Endothelial cell of umbilical vein (primary cell): ENCODE measurements at regions of chr11 and their contacts with region 1.

Region 1: GRCh38 chr11:62108017-62108750 is 15.6 kb upstream of the INCENP start:
- DNase-seq: peak; percentile 68
- H3K4me3 ChIP-seq: no peak overlapping the region
- H3K27ac ChIP-seq: no peak overlapping the region
- H3K4me1 ChIP-seq: peaks cover 9% of the 10 kb centered on the region
- H3K27me3 ChIP-seq: no peaks in the 10 kb centered on the region
- CTCF ChIP-seq: peak; percentile 56 to 66
- POLR2A ChIP-seq: no peak

Region 2: GRCh38 chr11:61747192-61747966 is 360.8 kb before region 1 on chr11:
- CTCF ChIA-PET with region 1: interaction called, 47 read pairs
- POLR2A ChIA-PET with region 1: no interaction called
- dilution Hi-C with region 1: no loop called
- intact Hi-C with region 1: loop called (anchors 2 kb)
- DNase-seq: peak; percentile 52
- H3K4me3 ChIP-seq: no peak overlapping the region
- H3K27ac ChIP-seq: no peak overlapping the region
- H3K4me1 ChIP-seq: no peaks in the 10 kb centered on the region
- H3K27me3 ChIP-seq: no peaks in the 10 kb centered on the region
- CTCF ChIP-seq: peak; percentile 93 to 98
- POLR2A ChIP-seq: no peak

Region 3: GRCh38 chr11:61871158-61871597 is 237.0 kb before region 1 on chr11:
- CTCF ChIA-PET with region 1: interaction called, 103 read pairs
- POLR2A ChIA-PET with region 1: no interaction called
- dilution Hi-C with region 1: no loop called
- intact Hi-C with region 1: loop called (anchors 1 kb)
- DNase-seq: peak; percentile 76
- H3K4me3 ChIP-seq: no peak overlapping the region
- H3K27ac ChIP-seq: no peak overlapping the region
- H3K4me1 ChIP-seq: peaks cover 12% of the 10 kb centered on the region
- H3K27me3 ChIP-seq: no peaks in the 10 kb centered on the region
- CTCF ChIP-seq: peak; percentile 95 to 99
- POLR2A ChIP-seq: no peak

Region 4: DNA sequence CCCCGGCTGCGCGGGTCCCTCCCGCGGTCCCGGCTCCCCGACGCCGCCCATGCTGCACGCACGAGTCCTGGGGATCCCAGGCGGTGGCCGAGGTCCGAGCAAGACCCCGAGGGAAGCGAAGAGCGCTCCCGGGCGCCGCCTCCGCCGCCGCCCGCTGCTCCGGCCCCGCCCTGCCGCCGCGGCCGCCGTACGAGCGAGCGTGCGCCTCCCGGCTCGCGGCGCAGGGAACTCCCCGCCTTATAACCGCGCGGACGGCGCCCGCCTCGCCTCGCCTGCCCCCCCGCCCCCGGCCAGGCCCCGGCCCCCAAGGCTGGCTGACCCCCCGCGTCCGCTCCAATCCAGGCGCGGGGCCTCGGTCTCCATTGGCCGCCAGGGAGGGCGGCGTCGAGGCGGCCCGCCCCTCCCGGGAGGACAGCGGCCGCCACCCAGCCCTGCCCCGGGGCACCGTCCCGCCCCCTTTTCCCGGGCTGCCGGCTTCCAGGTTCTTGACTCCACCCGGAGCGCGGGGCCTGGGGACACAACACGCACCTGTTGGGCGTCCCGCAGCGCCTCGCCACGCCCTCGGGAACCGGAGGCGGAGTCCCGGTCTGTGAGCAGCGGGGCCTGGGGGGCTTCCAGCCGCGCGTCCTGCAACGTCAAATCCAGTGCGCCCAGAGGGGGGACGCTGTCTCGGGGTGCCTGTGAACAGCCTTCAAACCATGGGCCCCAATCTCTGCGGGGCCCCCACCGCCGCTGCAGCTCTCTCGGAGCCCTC is 216.7 kb before region 1 on chr11 and contains the start of gene FADS3:
- CTCF ChIA-PET with region 1: interaction called, 319 read pairs
- POLR2A ChIA-PET with region 1: no interaction called
- dilution Hi-C with region 1: no loop called
- intact Hi-C with region 1: no loop called
- DNase-seq: peak; percentile 81
- H3K4me3 ChIP-seq: peak within 1 kb of the TSS; percentile 41 to 70 (median 70)
- H3K27ac ChIP-seq: peak within 1 kb of the TSS; percentile 58
- H3K4me1 ChIP-seq: peaks cover 32% of the 10 kb centered on the region
- H3K27me3 ChIP-seq: no peaks in the 10 kb centered on the region
- CTCF ChIP-seq: no peak
- POLR2A ChIP-seq: peak; percentile 78
- total RNA-seq, gene FADS3: 204 and 216 TPM in 2 replicates

Region 5: DNA sequence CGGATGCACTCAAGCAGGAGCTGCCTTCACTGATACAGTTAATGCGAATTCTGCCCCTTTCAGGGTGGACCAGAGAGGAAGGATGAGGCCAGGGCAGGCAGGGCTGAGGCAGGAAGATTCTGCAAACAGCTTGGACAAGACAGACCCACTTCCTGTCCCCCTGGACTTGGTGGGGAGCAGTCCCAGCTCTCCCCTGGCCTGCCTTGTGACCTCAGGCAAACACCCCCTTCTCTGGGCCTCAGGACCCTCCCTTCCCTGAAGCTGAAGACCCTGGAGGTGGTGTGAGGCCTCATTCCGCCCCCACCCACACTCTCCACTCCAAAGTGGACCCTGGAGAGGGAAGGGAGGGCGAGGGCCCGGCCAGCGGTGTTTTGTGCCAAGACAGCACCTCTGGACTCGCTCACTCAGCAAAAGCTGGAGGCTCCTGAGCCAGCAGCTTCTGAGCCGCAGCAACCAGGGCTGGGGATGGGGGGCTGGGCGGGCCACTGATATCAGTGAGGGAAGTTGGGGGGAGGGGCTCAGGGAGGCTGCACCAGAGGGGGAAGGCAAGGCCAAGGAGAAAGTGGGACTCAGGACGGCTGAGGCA is 199.4 kb before region 1 on chr11:
- CTCF ChIA-PET with region 1: interaction called, 14 read pairs
- POLR2A ChIA-PET with region 1: no interaction called
- dilution Hi-C with region 1: no loop called
- intact Hi-C with region 1: no loop called
- DNase-seq: no peak
- H3K4me3 ChIP-seq: no peak overlapping the region
- H3K27ac ChIP-seq: no peak overlapping the region
- H3K4me1 ChIP-seq: no peaks in the 10 kb centered on the region
- H3K27me3 ChIP-seq: no peaks in the 10 kb centered on the region
- CTCF ChIP-seq: no peak
- POLR2A ChIP-seq: no peak

Region 6: DNA sequence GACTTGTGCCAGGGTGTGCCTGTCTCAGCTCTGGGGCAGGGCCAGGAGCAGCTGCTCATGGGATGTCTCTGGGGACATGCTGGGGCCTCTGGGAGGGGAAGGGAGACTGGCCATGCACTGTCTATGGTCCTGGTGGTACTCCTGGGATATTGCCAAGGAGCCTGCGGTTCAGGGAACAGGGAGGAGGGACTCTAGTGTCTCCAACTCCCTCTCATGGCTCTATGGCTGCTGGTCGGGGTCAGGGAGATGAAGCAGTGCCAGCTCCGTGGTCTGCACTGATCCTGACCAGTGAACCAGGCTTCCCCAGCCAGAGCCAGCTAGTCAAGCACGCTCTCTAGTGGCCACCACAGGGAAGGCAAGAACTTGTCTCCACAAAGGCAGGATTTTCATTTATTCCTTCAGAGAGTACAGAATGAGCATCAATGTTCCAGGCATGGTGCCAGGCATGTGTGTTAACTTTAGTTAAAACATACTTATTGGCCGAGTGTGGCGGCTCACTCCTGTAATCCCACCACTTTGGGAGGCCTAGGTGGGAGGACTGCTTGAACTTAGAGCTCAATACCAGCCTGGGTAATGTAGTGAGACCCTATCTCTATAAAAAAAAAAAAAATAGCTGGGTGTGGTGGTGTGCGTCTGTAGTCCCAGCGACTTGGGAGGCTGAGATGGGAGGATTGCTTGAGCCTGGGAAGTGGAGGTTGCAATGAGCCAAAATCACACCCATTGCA is 160.5 kb before region 1 on chr11:
- CTCF ChIA-PET with region 1: interaction called, 80 read pairs
- POLR2A ChIA-PET with region 1: no interaction called
- dilution Hi-C with region 1: no loop called
- intact Hi-C with region 1: loop called (anchors 1 kb)
- DNase-seq: peak; percentile 84
- H3K4me3 ChIP-seq: no peak overlapping the region
- H3K27ac ChIP-seq: no peak overlapping the region
- H3K4me1 ChIP-seq: no peaks in the 10 kb centered on the region
- H3K27me3 ChIP-seq: peaks cover 2% of the 10 kb centered on the region in 2 experiments
- CTCF ChIP-seq: peak; percentile 92 to 94
- POLR2A ChIP-seq: no peak

Region 7: DNA sequence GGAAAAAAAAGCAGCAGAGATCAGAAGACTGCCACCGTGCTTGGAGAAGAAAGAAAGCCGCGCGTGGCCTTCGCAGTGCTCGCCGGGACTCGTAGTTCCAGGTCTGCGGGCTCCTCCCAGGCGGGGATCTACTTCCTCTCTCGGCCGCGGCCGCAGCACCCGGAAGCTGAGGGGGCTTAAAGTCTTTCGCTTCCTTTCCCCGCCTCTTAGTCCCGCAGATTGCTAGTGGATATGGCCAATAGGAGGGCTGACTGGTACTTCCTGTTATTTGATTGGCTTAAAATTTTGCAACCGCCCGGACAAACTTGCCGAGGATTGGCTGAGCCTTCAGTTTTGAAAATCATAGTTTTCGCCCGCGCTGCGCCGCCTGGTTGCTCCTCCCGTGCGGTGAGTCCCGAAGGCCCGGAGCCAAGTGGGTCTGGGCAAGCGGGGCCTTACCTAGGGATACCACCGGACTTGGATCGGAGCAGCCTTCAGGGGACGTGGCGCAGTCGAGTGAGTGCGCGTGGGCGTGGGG is 15.5 kb after region 1 on chr11 and contains the start of gene INCENP:
- CTCF ChIA-PET with region 1: interaction called, 17 read pairs
- POLR2A ChIA-PET with region 1: no interaction called
- dilution Hi-C with region 1: no loop called
- intact Hi-C with region 1: no loop called
- DNase-seq: peak; percentile 100
- H3K4me3 ChIP-seq: peak within 1 kb of the TSS; percentile 53 to 84 (median 69)
- H3K27ac ChIP-seq: peak within 1 kb of the TSS; percentile 19
- H3K4me1 ChIP-seq: peaks cover 19% of the 10 kb centered on the region
- H3K27me3 ChIP-seq: peaks cover 0 to 2% of the 10 kb centered on the region in 2 experiments
- CTCF ChIP-seq: no peak
- POLR2A ChIP-seq: peak; percentile 67
- total RNA-seq, gene INCENP: 73.6 and 86.8 TPM in 2 replicates